ENCODE measurements at regions of chrX and their contacts with region 1.

Region 1: GRCh38 chrX:16436348-16437188 is 213.4 kb upstream of the S100G start:
- DNase-seq: peak; percentile 91
- H3K4me3 Mint-ChIP-seq: no peak overlapping the region
- H3K27ac Mint-ChIP-seq: no peak overlapping the region
- H3K4me1 Mint-ChIP-seq: no peaks in the 10 kb centered on the region
- H3K27me3 Mint-ChIP-seq: peaks cover 22% of the 10 kb centered on the region
- CTCF ChIP-seq: peak; percentile 69

Region 2: GRCh38 chrX:15854712-15855567 is 581.6 kb before region 1 on chrX and contains the start of gene AP1S2:
- CTCF ChIA-PET with region 1: no interaction called
- POLR2A ChIA-PET with region 1: no interaction called
- intact Hi-C with region 1: loop called (anchors 10 kb)
- DNase-seq: peak; percentile 96
- H3K4me3 Mint-ChIP-seq: peak within 1 kb of the TSS; percentile 93
- H3K27ac Mint-ChIP-seq: peak within 1 kb of the TSS; percentile 61
- H3K4me1 Mint-ChIP-seq: peaks cover 6% of the 10 kb centered on the region
- H3K27me3 Mint-ChIP-seq: peaks cover 27% of the 10 kb centered on the region
- CTCF ChIP-seq: no peak
- total RNA-seq, gene AP1S2: 8.4 and 9.4 TPM in 2 replicates

Region 3: GRCh38 chrX:16664074-16664473 is 227.5 kb after region 1 on chrX:
- CTCF ChIA-PET with region 1: interaction called, 37 read pairs
- POLR2A ChIA-PET with region 1: no interaction called
- intact Hi-C with region 1: no loop called
- DNase-seq: no peak
- H3K4me3 Mint-ChIP-seq: no peak overlapping the region
- H3K27ac Mint-ChIP-seq: no peak overlapping the region
- H3K4me1 Mint-ChIP-seq: no peaks in the 10 kb centered on the region
- H3K27me3 Mint-ChIP-seq: peaks cover 50% of the 10 kb centered on the region
- CTCF ChIP-seq: no peak

Region 4: DNA sequence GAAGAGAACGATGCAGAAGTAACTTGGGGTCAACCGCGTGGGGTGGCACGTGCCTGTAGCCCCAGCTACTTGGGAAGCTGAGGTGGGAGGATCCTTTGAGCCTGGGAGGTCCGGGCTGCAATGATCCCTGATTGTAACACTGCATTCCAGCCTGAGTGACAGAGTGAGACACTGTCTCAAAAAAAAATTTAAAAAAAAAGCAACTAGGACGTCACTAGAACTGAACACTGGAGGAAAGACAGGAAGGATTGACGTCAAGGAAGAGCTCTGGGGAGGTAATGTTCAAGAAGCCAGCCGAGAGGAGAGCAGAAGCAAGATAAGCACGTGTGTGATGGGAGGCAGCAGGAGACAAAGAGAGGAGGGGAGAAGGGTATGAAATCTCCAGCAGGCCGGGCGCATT is 242.1 kb after region 1 on chrX:
- CTCF ChIA-PET with region 1: interaction called, 10 read pairs
- POLR2A ChIA-PET with region 1: no interaction called
- intact Hi-C with region 1: no loop called
- DNase-seq: no peak
- H3K4me3 Mint-ChIP-seq: no peak overlapping the region
- H3K27ac Mint-ChIP-seq: no peak overlapping the region
- H3K4me1 Mint-ChIP-seq: no peaks in the 10 kb centered on the region
- H3K27me3 Mint-ChIP-seq: peaks cover 54% of the 10 kb centered on the region
- CTCF ChIP-seq: no peak

Region 5: GRCh38 chrX:16695079-16695676 is 258.6 kb after region 1 on chrX:
- CTCF ChIA-PET with region 1: interaction called, 12 read pairs
- POLR2A ChIA-PET with region 1: no interaction called
- intact Hi-C with region 1: loop called (anchors 1 kb)
- DNase-seq: peak; percentile 68
- H3K4me3 Mint-ChIP-seq: no peak overlapping the region
- H3K27ac Mint-ChIP-seq: no peak overlapping the region
- H3K4me1 Mint-ChIP-seq: no peaks in the 10 kb centered on the region
- H3K27me3 Mint-ChIP-seq: peaks cover 47% of the 10 kb centered on the region
- CTCF ChIP-seq: peak; percentile 80

Region 6: GRCh38 chrX:16797358-16797757 is 360.8 kb after region 1 on chrX:
- CTCF ChIA-PET with region 1: no interaction called
- POLR2A ChIA-PET with region 1: no interaction called
- intact Hi-C with region 1: no loop called
- DNase-seq: no peak
- H3K4me3 Mint-ChIP-seq: no peak overlapping the region
- H3K27ac Mint-ChIP-seq: no peak overlapping the region
- H3K4me1 Mint-ChIP-seq: no peaks in the 10 kb centered on the region
- H3K27me3 Mint-ChIP-seq: no peaks in the 10 kb centered on the region
- CTCF ChIP-seq: no peak

Measured in MCF 10A (cell line).